ENCODE measurements at regions of chr2 and their contacts with region 1.

Region 1: GRCh38 chr2:85750587-85751575 is 2.9 kb upstream of the ATOH8 start:
- DNase-seq: peak; percentile 25 to 83
- H3K4me3 ChIP-seq: no peak overlapping the region
- H3K27ac ChIP-seq: no peak overlapping the region
- H3K4me1 ChIP-seq: peaks cover 0 to 10% (median 8%) of the 10 kb centered on the region in 4 experiments; a peak in 5 of 7 replicates
- H3K27me3 ChIP-seq: peaks cover 39 to 57% (median 49%) of the 10 kb centered on the region in 4 experiments
- CTCF ChIP-seq: peak in 2 of 3 experiments; percentile 91 to 93; a peak in 3 of 4 replicates
- EP300 ChIP-seq: no peak
- POLR2A ChIP-seq: no peak
- RAD21 ChIP-seq: peak; percentile 81 to 91

Region 2: GRCh38 chr2:85765081-85765731 is 14.3 kb after region 1 on chr2:
- CTCF ChIA-PET with region 1: interaction called, 986 read pairs
- POLR2A ChIA-PET with region 1: interaction called, 17 read pairs
- DNase-seq: peak in 1 of 2 experiments; percentile 69
- H3K4me3 ChIP-seq: peak overlapping the region; percentile 16 to 55 (median 38); a peak in 6 of 8 replicates
- H3K27ac ChIP-seq: no peak overlapping the region
- H3K4me1 ChIP-seq: peaks cover 5 to 41% (median 30%) of the 10 kb centered on the region in 4 experiments
- H3K27me3 ChIP-seq: peaks cover 0 to 29% (median 22%) of the 10 kb centered on the region in 4 experiments; a peak in 6 of 7 replicates
- CTCF ChIP-seq: no peak
- EP300 ChIP-seq: no peak
- POLR2A ChIP-seq: no peak
- RAD21 ChIP-seq: no peak

Region 3: GRCh38 chr2:85772019-85772745 is 21.3 kb after region 1 on chr2:
- CTCF ChIA-PET with region 1: interaction called, 986 read pairs
- POLR2A ChIA-PET with region 1: interaction called, 17 read pairs
- DNase-seq: peak in 1 of 2 experiments; percentile 66
- H3K4me3 ChIP-seq: peak overlapping the region in 2 of 4 experiments; percentile 5 to 7; a peak in 2 of 8 replicates
- H3K27ac ChIP-seq: no peak overlapping the region
- H3K4me1 ChIP-seq: peaks cover 0 to 39% (median 26%) of the 10 kb centered on the region in 4 experiments; a peak in 6 of 7 replicates
- H3K27me3 ChIP-seq: peaks cover 0 to 27% (median 17%) of the 10 kb centered on the region in 4 experiments; a peak in 6 of 7 replicates
- CTCF ChIP-seq: peak in 2 of 3 experiments; percentile 7 to 29; a peak in 2 of 4 replicates
- EP300 ChIP-seq: no peak
- POLR2A ChIP-seq: no peak
- RAD21 ChIP-seq: peak in 1 of 2 experiments; percentile 4; a peak in 2 of 4 replicates

Region 4: DNA sequence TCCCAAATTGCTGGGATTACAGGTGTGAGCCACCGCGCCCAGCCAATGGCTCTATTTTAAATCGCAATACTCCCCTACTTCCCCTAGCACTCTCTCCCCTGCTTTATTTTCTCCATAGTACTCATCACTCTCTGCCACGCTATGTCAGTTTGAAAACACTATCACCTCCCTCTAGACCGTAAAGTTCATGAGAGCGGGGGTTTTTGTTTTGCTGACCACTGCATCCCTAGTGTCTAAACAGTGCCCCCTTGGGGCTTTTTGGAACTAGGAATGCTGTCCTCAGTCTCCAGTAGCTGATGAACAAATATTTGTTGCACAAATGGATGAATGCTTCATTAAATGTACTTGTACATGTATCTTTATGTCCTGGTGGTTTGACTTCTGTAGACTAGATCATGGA is 47.0 kb after region 1 on chr2:
- CTCF ChIA-PET with region 1: interaction called, 986 read pairs
- POLR2A ChIA-PET with region 1: interaction called, 3 read pairs
- DNase-seq: no peak
- H3K4me3 ChIP-seq: no peak overlapping the region
- H3K27ac ChIP-seq: no peak overlapping the region
- H3K4me1 ChIP-seq: no peaks in the 10 kb centered on the region; a peak in 1 of 7 replicates
- H3K27me3 ChIP-seq: peaks cover 0 to 2% (median 0%) of the 10 kb centered on the region in 4 experiments; a peak in 2 of 7 replicates
- CTCF ChIP-seq: peak in 2 of 3 experiments; percentile 58 to 74; a peak in 3 of 4 replicates
- EP300 ChIP-seq: no peak
- POLR2A ChIP-seq: no peak
- RAD21 ChIP-seq: peak; percentile 71 to 82

Region 5: DNA sequence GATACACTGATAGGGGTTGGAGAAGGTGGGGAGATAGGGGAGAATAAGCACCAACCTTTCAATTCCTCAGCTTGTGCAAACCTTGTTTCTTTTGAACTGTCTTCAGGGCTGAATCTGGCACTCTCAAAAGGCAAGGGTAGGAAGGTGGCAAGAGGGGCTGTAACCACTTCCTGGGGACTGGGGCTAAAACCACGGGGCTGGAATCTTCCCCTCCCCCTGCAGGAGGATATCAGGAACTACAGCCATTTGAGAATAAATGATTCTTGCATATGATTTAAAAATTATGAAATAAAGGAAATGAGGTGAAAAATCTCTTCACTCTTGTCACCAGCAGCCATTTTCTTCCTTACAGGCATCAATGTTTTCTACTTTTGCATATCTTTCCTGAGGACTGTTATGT is 53.7 kb after region 1 on chr2:
- CTCF ChIA-PET with region 1: interaction called, 128 read pairs
- POLR2A ChIA-PET with region 1: interaction called, 3 read pairs
- DNase-seq: no peak
- H3K4me3 ChIP-seq: no peak overlapping the region
- H3K27ac ChIP-seq: no peak overlapping the region
- H3K4me1 ChIP-seq: no peaks in the 10 kb centered on the region
- H3K27me3 ChIP-seq: peaks cover 0 to 2% (median 0%) of the 10 kb centered on the region in 4 experiments; a peak in 1 of 7 replicates
- CTCF ChIP-seq: peak; percentile 51 to 61 (median 59)
- EP300 ChIP-seq: no peak
- POLR2A ChIP-seq: no peak
- RAD21 ChIP-seq: peak; percentile 62

Region 6: GRCh38 chr2:86042256-86043168 is 291.6 kb after region 1 on chr2:
- CTCF ChIA-PET with region 1: no interaction called
- POLR2A ChIA-PET with region 1: no interaction called
- DNase-seq: no peak
- H3K4me3 ChIP-seq: no peak overlapping the region
- H3K27ac ChIP-seq: no peak overlapping the region
- H3K4me1 ChIP-seq: no peaks in the 10 kb centered on the region; a peak in 1 of 7 replicates
- H3K27me3 ChIP-seq: no peaks in the 10 kb centered on the region
- CTCF ChIP-seq: no peak
- EP300 ChIP-seq: no peak
- POLR2A ChIP-seq: no peak
- RAD21 ChIP-seq: no peak

Measured in H1 (cell line).